PC-3 (cell line): ENCODE measurements at regions of chr3 and their contacts with region 1.

Region 1: GRCh38 chr3:115040673-115041286 is 106.3 kb downstream of the ZBTB20 start:
- DNase-seq: peak; percentile 63
- ATAC-seq: peak; percentile 78
- H3K4me3 ChIP-seq: no peak overlapping the region
- H3K27ac ChIP-seq: no peak overlapping the region
- H3K4me1 ChIP-seq: no peaks in the 10 kb centered on the region
- H3K27me3 ChIP-seq: no peaks in the 10 kb centered on the region
- CTCF ChIP-seq: peak; percentile 86

Region 2: DNA sequence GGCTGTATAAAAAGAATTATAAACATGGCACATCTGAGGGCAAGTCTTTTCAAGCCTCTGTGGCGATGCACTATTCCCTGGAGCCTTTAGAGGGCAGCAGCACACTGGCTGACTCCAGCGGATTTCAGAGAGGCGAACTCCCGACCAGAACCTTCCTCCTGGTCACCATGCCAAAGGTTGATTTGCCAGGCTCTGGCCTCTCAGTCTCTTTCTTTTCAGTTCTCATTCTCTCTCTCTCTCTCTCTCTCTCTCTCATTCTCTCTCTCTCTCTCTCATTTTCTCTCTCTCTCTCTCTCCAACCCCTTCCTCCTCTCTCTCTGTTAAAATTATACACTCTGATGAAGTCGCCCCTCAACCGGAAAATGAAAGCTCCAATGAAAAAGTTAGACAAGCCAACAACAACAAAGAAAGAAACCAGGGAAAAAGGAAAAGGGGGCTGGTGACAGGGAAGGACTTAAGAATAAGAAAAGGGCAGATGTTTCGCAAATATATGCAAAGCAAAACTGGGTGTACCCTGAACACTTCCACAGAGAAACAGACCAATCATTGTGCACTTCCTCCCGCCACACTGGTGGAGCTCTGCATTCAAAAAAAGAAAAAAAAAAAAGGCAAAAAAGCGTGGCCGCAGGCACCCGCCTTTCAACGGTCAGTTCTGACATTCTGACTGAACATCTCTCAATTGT is 656.8 kb before region 1 on chr3:
- CTCF ChIA-PET with region 1: no interaction called
- POLR2A ChIA-PET with region 1: no interaction called
- intact Hi-C with region 1: loop called (anchors 2 kb)
- DNase-seq: peak; percentile 77
- ATAC-seq: peak; percentile 91
- H3K4me3 ChIP-seq: no peak overlapping the region
- H3K27ac ChIP-seq: no peak overlapping the region
- H3K4me1 ChIP-seq: no peaks in the 10 kb centered on the region
- H3K27me3 ChIP-seq: no peaks in the 10 kb centered on the region
- CTCF ChIP-seq: peak; percentile 92